ENCODE measurements at regions of chr7 and their contacts with region 1.

Region 1: DNA sequence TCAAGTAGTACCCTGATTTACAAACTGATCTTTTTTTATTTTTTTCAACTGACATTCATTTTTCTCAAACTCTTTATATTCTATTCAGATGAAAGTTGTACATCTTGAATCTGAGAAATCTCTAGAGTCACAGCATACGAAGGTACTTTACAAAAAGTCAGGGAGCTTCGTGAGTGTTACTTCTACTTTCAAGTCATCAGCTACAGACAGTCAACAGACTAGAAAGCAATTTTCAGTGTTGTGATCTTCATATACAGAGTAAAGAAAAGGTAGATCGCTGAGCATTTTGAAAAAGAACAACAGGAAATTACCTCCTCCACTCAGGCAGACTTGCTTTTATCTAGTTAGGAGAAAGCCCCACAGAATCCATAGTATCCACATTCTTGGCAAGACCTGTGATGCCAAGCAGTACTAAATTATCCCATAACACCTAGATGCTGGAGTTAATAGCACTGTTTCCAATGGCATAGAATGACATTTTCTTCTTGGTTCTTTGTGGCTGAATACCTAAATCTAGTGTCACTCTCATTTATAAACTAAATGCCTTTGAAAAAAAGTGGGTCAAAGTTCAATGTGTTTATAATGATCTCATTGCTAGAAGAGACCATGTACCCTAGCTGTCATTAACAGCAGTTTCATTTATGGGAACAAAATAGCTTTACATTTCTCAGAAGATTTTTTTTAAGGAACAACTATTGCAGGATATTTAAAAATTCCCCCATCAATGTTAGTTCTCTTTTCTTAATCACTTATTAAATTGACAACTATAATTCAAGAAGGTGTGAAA is 12.0 kb upstream of the ZNF800 start:
- DNase-seq: no peak
- H3K4me3 Mint-ChIP-seq: peak overlapping the region; percentile 30
- H3K27ac Mint-ChIP-seq: peak overlapping the region; percentile 65
- H3K4me1 Mint-ChIP-seq: peaks cover 23% of the 10 kb centered on the region
- H3K27me3 Mint-ChIP-seq: no peaks in the 10 kb centered on the region

Region 2: GRCh38 chr7:126803060-126803665 is 601.3 kb before region 1 on chr7:
- CTCF ChIA-PET with region 1: no interaction called
- intact Hi-C with region 1: loop called (anchors 2 kb)
- DNase-seq: peak; percentile 51
- H3K4me3 Mint-ChIP-seq: no peak overlapping the region
- H3K27ac Mint-ChIP-seq: no peak overlapping the region
- H3K4me1 Mint-ChIP-seq: no peaks in the 10 kb centered on the region
- H3K27me3 Mint-ChIP-seq: peaks cover 3% of the 10 kb centered on the region

Region 3: GRCh38 chr7:127107601-127108007 is 296.9 kb before region 1 on chr7:
- CTCF ChIA-PET with region 1: no interaction called
- intact Hi-C with region 1: loop called (anchors 1 kb)
- DNase-seq: peak; percentile 56
- H3K4me3 Mint-ChIP-seq: no peak overlapping the region
- H3K27ac Mint-ChIP-seq: no peak overlapping the region
- H3K4me1 Mint-ChIP-seq: no peaks in the 10 kb centered on the region
- H3K27me3 Mint-ChIP-seq: peaks cover 15% of the 10 kb centered on the region

Region 4: DNA sequence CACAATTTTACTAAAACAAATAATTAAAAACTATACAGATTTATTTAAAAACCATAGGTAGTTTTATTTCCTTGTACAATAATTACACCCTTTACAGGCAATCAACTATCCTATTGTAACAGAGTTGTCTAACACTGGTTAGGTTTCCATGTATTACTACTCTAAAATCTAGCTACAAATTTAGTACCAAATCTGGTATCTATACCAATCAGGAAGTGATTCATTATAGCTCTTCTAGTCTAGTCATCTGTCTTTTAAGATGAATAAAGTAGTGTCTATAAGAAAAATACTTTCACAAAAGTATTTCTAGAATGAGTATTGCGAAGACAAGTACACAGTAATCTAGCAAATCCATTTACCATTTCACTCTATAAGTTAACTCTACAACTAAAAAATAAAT is 28.8 kb before region 1 on chr7:
- CTCF ChIA-PET with region 1: interaction called, 3 read pairs
- intact Hi-C with region 1: loop called (anchors 1 kb)
- DNase-seq: no peak
- H3K4me3 Mint-ChIP-seq: no peak overlapping the region
- H3K27ac Mint-ChIP-seq: no peak overlapping the region
- H3K4me1 Mint-ChIP-seq: peaks cover 53% of the 10 kb centered on the region
- H3K27me3 Mint-ChIP-seq: no peaks in the 10 kb centered on the region

Region 5: DNA sequence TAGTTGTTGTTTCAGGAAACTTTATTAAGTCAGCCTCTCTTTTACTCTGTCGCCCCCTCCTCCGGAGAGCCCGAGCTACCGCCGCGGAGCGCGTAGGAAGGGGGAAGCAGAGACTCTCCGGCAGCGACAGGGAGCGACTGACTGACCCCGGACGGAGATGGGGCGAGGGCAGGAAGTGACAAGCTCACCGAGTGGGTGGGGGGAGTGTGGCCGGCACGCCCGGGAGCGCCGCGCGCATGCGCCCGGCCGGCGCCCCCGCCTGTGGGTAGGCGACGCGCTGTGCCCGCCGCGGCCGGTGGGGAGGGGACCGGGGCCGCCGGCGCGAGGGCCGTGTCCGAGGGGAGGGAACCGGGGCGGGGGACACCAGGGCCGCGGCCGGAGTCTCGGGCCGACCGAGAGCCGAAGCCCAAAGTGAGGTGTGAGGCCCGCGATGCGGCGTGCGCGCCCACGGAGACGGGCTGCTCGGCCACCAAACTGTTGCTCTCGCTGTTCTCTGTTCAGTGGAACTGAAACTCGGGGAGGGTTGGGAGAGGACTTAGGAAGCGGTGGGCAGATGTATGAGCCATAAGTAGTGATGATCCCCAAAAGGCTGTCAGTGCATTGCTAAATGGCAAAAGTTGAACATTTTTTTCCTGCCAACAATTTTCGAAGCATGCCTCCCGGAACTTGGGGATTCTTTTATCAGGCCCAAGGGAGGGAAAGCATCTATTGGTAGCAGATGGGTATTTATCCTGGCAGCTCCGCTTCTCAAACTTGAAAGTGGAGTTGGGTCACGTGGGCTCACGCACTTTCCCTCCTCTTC is 11.7 kb before region 1 on chr7 and contains the start of gene ZNF800:
- CTCF ChIA-PET with region 1: interaction called, 13 read pairs
- intact Hi-C with region 1: loop called (anchors 1 kb)
- DNase-seq: peak; percentile 89
- H3K4me3 Mint-ChIP-seq: peak within 1 kb of the TSS; percentile 95
- H3K27ac Mint-ChIP-seq: peak within 1 kb of the TSS; percentile 93
- H3K4me1 Mint-ChIP-seq: peaks cover 61% of the 10 kb centered on the region
- H3K27me3 Mint-ChIP-seq: no peaks in the 10 kb centered on the region
- total RNA-seq, gene ZNF800: 18.2 to 19.5 TPM

Region 6: GRCh38 chr7:127858091-127858914 is 453.8 kb after region 1 on chr7:
- CTCF ChIA-PET with region 1: no interaction called
- intact Hi-C with region 1: loop called (anchors 2 kb)
- DNase-seq: no peak
- H3K4me3 Mint-ChIP-seq: no peak overlapping the region
- H3K27ac Mint-ChIP-seq: no peak overlapping the region
- H3K4me1 Mint-ChIP-seq: peaks cover 54% of the 10 kb centered on the region
- H3K27me3 Mint-ChIP-seq: no peaks in the 10 kb centered on the region

Measured in activated naive CD4-positive, alpha-beta T cell treated with anti-CD3 and anti-CD28 coated beads for 36 hours (primary cell).